ENCODE measurements at regions of chr21 and their contacts with region 1.

Region 1: GRCh38 chr21:33892853-33893252 is 22.8 kb downstream of the ATP5PO start:
- DNase-seq: peak; percentile 64 to 66
- H3K4me3 ChIP-seq: no peak overlapping the region
- H3K27ac ChIP-seq: no peak overlapping the region
- H3K4me1 ChIP-seq: peaks cover 3 to 11% (median 6%) of the 10 kb centered on the region in 4 experiments; a peak in 6 of 7 replicates
- H3K27me3 ChIP-seq: no peaks in the 10 kb centered on the region
- CTCF ChIP-seq: peak; percentile 55 to 75 (median 71)
- EP300 ChIP-seq: no peak
- POLR2A ChIP-seq: no peak
- RAD21 ChIP-seq: peak; percentile 70 to 81

Region 2: GRCh38 chr21:33751120-33751519 is 141.7 kb before region 1 on chr21:
- CTCF ChIA-PET with region 1: no interaction called
- POLR2A ChIA-PET with region 1: no interaction called
- DNase-seq: no peak
- H3K4me3 ChIP-seq: no peak overlapping the region
- H3K27ac ChIP-seq: no peak overlapping the region
- H3K4me1 ChIP-seq: no peaks in the 10 kb centered on the region
- H3K27me3 ChIP-seq: no peaks in the 10 kb centered on the region
- CTCF ChIP-seq: no peak
- EP300 ChIP-seq: no peak
- POLR2A ChIP-seq: no peak
- RAD21 ChIP-seq: no peak

Region 3: DNA sequence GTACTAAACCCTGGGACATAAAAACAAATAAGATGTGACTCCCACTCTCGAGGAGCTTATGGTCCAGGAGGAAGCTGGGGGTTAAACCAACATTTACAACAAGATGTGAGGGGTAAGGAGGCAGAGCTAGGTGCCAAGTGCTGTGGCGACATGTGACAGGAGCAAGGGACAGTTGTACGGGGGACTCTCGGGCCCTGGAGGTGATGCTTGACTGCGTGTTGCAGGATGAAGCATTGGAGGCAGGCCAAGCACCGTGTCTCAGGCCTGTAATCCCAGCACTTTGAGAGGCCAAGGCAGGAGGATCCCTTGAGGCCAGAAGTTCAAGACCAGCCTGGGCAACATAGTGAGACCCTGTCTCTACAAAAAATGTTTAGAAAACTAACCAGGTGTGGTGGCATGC is 14.0 kb before region 1 on chr21:
- CTCF ChIA-PET with region 1: interaction called, 10 read pairs
- POLR2A ChIA-PET with region 1: interaction called, 3 read pairs
- DNase-seq: no peak
- H3K4me3 ChIP-seq: no peak overlapping the region
- H3K27ac ChIP-seq: no peak overlapping the region
- H3K4me1 ChIP-seq: no peaks in the 10 kb centered on the region
- H3K27me3 ChIP-seq: no peaks in the 10 kb centered on the region
- CTCF ChIP-seq: no peak
- EP300 ChIP-seq: no peak
- POLR2A ChIP-seq: no peak
- RAD21 ChIP-seq: no peak

Region 4: DNA sequence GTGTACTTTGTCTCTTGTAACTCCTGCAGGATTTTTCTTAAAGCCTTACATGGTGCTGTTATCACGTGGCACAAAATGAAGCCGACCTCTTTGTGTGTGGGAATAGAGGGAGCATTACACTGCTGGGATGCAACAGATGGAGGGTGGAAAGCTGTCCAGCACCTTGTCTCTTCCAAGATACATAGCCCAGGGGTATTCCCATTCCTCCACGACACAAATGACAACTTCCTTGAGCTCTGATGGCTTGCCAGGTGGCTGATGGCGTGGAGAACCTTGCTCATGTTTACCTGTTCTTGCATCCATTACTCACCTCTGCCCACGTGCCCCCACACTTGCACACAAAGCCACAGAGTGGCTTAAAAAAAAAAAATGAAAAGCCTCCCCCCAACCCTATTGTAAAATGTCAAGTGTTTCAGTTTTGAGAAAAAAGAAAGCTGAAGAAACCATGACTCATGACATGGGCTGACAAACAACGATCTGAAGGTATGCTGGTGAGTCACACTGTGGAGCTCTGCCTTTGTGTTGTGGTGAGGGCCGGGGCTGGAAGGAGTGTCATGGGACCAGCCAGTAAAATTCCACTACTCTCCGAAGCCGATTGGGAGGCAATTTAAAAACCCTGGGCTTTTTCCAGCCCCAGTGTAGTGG is 54.7 kb after region 1 on chr21:
- CTCF ChIA-PET with region 1: no interaction called
- POLR2A ChIA-PET with region 1: no interaction called
- DNase-seq: peak; percentile 46 to 53
- H3K4me3 ChIP-seq: peak overlapping the region in 2 of 4 experiments; percentile 8 to 48; a peak in 4 of 8 replicates
- H3K27ac ChIP-seq: peak overlapping the region; percentile 91
- H3K4me1 ChIP-seq: peaks cover 10 to 21% (median 15%) of the 10 kb centered on the region in 4 experiments; a peak in 6 of 7 replicates
- H3K27me3 ChIP-seq: no peaks in the 10 kb centered on the region
- CTCF ChIP-seq: no peak
- EP300 ChIP-seq: no peak
- POLR2A ChIP-seq: peak; percentile 22 to 24; a peak in 2 of 3 replicates
- RAD21 ChIP-seq: 0 out of 4 replicates have a peak, but pooled peaks of 1 of the 2 experiments have one; percentile 2